Right cardiac atrium (tissue), 5 donors: ENCODE measurements at regions of chr5 and their contacts with region 1.

Region 1: GRCh38 chr5:38556599-38557305 is at the start of gene LIFR:
- DNase-seq: peak; percentile 87 to 95 (median 94)
- ATAC-seq: peak; percentile 90 to 91
- H3K4me3 ChIP-seq: peak within 1 kb of the TSS; percentile 99
- H3K27ac ChIP-seq: peak within 1 kb of the TSS; percentile 97
- H3K4me1 ChIP-seq: peaks cover 4% of the 10 kb centered on the region
- H3K27me3 ChIP-seq: no peaks in the 10 kb centered on the region
- total RNA-seq, gene LIFR: 45.3 to 66.9 (median 63.4) TPM

Region 2: DNA sequence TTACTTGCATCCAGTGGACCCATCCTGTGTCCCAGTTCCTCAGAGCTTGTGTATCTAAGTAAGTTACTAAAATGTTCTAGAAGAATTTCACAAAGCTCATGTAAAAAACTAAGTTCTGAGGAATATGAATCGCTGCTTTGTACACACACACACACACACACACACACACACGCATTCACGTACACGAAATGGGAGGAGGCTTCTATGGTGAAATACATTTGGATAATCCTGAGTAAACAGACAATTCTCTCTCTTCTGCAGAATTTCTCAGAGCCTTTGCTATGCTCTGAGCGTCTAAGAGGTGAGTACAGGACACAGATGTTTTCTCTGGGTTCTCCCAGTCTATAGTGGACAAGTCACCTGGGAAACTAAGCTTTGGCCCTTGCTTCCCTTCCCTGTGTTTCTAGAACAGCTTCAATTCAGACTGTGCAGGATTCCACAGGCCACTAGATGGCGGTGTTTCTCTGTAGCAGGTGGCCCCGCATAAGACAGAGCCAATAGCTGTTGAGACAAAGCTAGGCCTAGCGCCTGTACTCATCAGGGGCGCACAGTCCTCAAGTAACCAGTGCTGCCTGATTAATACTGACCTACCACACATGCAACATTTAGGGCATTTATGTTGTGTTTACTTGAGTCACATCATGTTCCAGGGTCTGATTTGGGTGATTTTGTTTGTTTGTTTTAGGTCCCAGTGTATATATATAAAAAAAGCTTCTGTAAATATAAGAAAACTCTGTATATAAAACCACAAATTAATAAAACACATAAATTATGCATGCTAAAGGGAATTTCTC is 115.1 kb before region 1 on chr5:
- intact Hi-C with region 1: loop called in 1 of 4 experiments (anchors 10 kb)
- DNase-seq: peak; percentile 87 to 94 (median 87)
- ATAC-seq: peak; percentile 92 to 93
- H3K4me3 ChIP-seq: no peak overlapping the region
- H3K27ac ChIP-seq: no peak overlapping the region
- H3K4me1 ChIP-seq: no peaks in the 10 kb centered on the region
- H3K27me3 ChIP-seq: no peaks in the 10 kb centered on the region

Region 3: DNA sequence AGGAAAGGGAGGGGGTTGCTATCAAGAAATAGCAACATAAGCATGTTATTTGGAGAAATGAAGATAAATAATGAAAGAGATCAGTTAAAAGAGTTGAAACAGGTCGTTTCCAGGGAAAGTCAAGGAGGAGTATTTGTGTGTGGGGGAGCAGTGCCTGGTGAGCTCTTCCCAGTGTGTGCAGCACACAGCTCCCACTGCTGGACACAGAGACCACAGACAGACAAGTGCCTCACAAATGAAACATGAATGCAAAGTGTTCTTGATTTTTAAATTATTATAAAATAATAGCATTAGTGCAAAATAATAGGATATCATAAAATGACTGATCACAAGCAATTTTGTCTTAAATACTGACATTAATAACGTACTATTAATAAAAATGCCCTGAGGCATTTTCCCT is 41.1 kb before region 1 on chr5:
- intact Hi-C with region 1: no loop called
- DNase-seq: no peak
- ATAC-seq: peak; percentile 55 to 64
- H3K4me3 ChIP-seq: no peak overlapping the region
- H3K27ac ChIP-seq: no peak overlapping the region
- H3K4me1 ChIP-seq: no peaks in the 10 kb centered on the region
- H3K27me3 ChIP-seq: no peaks in the 10 kb centered on the region

Region 4: GRCh38 chr5:38660194-38660668 is 103.5 kb after region 1 on chr5:
- intact Hi-C with region 1: loop called (anchors 5 to 10 kb)
- DNase-seq: peak in 2 of 3 donors; percentile 55 to 58
- ATAC-seq: peak; percentile 74 to 82
- H3K4me3 ChIP-seq: no peak overlapping the region
- H3K27ac ChIP-seq: peak overlapping the region; percentile 83
- H3K4me1 ChIP-seq: peaks cover 4% of the 10 kb centered on the region
- H3K27me3 ChIP-seq: no peaks in the 10 kb centered on the region

Region 5: DNA sequence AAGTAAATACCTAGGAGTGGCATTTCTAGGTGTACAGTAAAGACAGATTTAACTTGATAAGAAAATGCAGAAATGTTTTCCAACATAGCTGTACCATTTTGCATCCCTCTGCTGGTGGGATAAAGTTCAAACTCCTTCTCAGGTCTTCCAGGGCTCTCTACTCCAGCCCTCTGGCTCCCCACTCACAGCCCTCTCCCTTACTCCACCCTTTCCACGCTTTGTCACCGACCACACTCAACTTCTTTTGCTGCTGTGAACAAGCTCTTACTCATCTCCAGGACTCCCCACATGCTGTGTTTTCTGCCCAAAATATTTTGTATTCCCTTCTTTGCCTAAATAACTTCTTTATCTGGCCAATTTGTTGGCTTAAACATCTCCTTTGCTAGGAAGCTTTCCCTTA is 198.4 kb after region 1 on chr5:
- intact Hi-C with region 1: no loop called
- DNase-seq: no peak
- ATAC-seq: peak in 1 of 2 donors; percentile 55
- H3K4me3 ChIP-seq: no peak overlapping the region
- H3K27ac ChIP-seq: no peak overlapping the region
- H3K4me1 ChIP-seq: peaks cover 4% of the 10 kb centered on the region
- H3K27me3 ChIP-seq: no peaks in the 10 kb centered on the region